T-cell (primary cell): ENCODE measurements at regions of chr1 and their contacts with region 1.

Region 1: GRCh38 chr1:212827824-212828278 is 19.6 kb downstream of the SPATA45 start:
- DNase-seq: no peak
- ATAC-seq: no peak
- H3K4me3 ChIP-seq: no peak overlapping the region
- H3K4me3 Mint-ChIP-seq: no peak overlapping the region
- H3K27ac ChIP-seq: no peak overlapping the region
- H3K27ac Mint-ChIP-seq: no peak overlapping the region
- H3K4me1 ChIP-seq: no peaks in the 10 kb centered on the region
- H3K4me1 Mint-ChIP-seq: peaks cover 0 to 3% (median 0%) of the 10 kb centered on the region in 3 donors
- H3K27me3 ChIP-seq: peaks cover 0 to 12% of the 10 kb centered on the region in 2 experiments
- H3K27me3 Mint-ChIP-seq: peaks cover 3 to 6% of the 10 kb centered on the region in 2 donors

Region 2: GRCh38 chr1:212692774-212693644 is 134.8 kb before region 1 on chr1:
- CTCF ChIA-PET with region 1: interaction called in 1 of 2 experiments, 16 read pairs
- POLR2A ChIA-PET with region 1: no interaction called
- DNase-seq: no peak
- ATAC-seq: no peak
- H3K4me3 ChIP-seq: no peak overlapping the region
- H3K4me3 Mint-ChIP-seq: no peak overlapping the region
- H3K27ac ChIP-seq: no peak overlapping the region
- H3K27ac Mint-ChIP-seq: no peak overlapping the region
- H3K4me1 ChIP-seq: peaks cover 4 to 7% of the 10 kb centered on the region in 2 experiments
- H3K4me1 Mint-ChIP-seq: peaks cover 9 to 20% (median 19%) of the 10 kb centered on the region in 3 donors
- H3K27me3 ChIP-seq: peaks cover 0 to 37% of the 10 kb centered on the region in 2 experiments
- H3K27me3 Mint-ChIP-seq: peaks cover 0 to 7% of the 10 kb centered on the region in 2 donors

Region 3: DNA sequence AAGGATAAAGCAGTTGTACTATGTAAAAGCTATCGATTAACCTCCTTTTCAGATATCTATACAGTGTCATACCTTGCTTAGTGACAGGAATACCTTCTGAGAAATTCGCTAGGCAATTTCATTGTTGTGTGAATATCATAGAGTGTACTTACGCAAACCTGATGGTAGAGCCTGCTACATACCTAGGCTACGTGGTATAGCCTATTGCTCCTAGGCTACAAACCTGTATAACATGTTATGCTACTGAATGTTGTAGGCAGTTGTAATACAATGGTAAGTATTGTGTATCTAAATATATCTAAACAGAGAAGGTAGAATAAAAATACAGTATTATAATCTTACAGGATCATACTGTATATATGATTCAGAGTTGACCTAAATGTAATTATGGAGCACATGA is 56.7 kb after region 1 on chr1:
- CTCF ChIA-PET with region 1: no interaction called
- POLR2A ChIA-PET with region 1: no interaction called
- DNase-seq: no peak
- ATAC-seq: no peak
- H3K4me3 ChIP-seq: no peak overlapping the region
- H3K4me3 Mint-ChIP-seq: no peak overlapping the region
- H3K27ac ChIP-seq: no peak overlapping the region
- H3K27ac Mint-ChIP-seq: no peak overlapping the region
- H3K4me1 ChIP-seq: no peaks in the 10 kb centered on the region
- H3K4me1 Mint-ChIP-seq: no peaks in the 10 kb centered on the region
- H3K27me3 ChIP-seq: no peaks in the 10 kb centered on the region
- H3K27me3 Mint-ChIP-seq: no peaks in the 10 kb centered on the region